Activated CD4-positive, alpha-beta memory T cell treated with anti-CD3 and anti-CD28 coated beads for 36 hours (primary cell): ENCODE measurements at regions of chr2 and their contacts with region 1.

Region 1: DNA sequence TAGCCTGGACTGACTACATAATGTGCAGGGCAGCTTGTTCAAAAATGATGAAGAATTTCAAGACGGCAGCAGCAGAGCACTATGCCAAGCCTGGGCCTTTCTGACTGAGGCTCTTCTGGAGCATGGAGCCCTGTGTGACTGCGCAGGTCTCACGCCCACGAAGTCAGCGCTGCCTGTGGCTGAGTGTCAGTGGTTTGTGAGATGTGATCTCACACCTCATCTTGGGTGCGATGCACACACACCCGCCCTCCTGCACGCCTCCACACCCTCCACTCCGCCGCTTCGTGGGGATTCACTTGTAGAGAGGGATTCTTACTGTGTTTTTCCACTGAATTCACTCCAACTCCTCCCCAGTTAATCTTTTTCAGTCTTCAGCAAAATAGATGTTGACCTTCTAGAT is 103.9 kb downstream of the VIT start:
- DNase-seq: peak; percentile 87
- H3K4me3 Mint-ChIP-seq: peak overlapping the region; percentile 9
- H3K27ac Mint-ChIP-seq: peak overlapping the region; percentile 53
- H3K4me1 Mint-ChIP-seq: peaks cover 11% of the 10 kb centered on the region
- H3K27me3 Mint-ChIP-seq: peaks cover 33% of the 10 kb centered on the region

Region 2: GRCh38 chr2:36711741-36712288 is 88.6 kb before region 1 on chr2:
- CTCF ChIA-PET with region 1: no interaction called
- POLR2A ChIA-PET with region 1: no interaction called
- intact Hi-C with region 1: no loop called
- DNase-seq: no peak
- H3K4me3 Mint-ChIP-seq: no peak overlapping the region
- H3K27ac Mint-ChIP-seq: no peak overlapping the region
- H3K4me1 Mint-ChIP-seq: no peaks in the 10 kb centered on the region
- H3K27me3 Mint-ChIP-seq: peaks cover 8% of the 10 kb centered on the region

Region 3: GRCh38 chr2:36835125-36835524 is 34.7 kb after region 1 on chr2:
- CTCF ChIA-PET with region 1: no interaction called
- POLR2A ChIA-PET with region 1: no interaction called
- intact Hi-C with region 1: loop called (anchors 2 kb)
- DNase-seq: no peak
- H3K4me3 Mint-ChIP-seq: no peak overlapping the region
- H3K27ac Mint-ChIP-seq: peak overlapping the region; percentile 3
- H3K4me1 Mint-ChIP-seq: peaks cover 11% of the 10 kb centered on the region
- H3K27me3 Mint-ChIP-seq: peaks cover 15% of the 10 kb centered on the region

Region 4: DNA sequence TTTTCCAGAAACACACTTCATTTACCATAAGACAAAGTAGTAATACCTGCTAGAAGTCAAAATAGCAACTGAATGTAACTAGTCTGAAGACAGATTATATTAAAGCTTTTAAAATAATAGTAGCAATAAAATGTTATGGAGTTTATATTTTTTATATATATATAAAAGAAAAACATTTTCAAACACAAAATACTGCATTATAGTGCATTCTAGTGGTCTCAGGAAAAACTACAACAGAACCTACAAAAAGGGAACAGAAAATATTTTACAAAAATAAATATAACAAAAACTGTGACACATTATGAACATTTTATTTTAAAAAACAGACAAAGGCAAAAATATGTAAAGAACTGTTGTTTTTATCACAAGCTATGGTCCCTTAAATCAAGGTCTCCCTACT is 117.9 kb after region 1 on chr2:
- CTCF ChIA-PET with region 1: no interaction called
- POLR2A ChIA-PET with region 1: no interaction called
- intact Hi-C with region 1: loop called (anchors 5 kb)
- DNase-seq: no peak
- H3K4me3 Mint-ChIP-seq: no peak overlapping the region
- H3K27ac Mint-ChIP-seq: no peak overlapping the region
- H3K4me1 Mint-ChIP-seq: peaks cover 13% of the 10 kb centered on the region
- H3K27me3 Mint-ChIP-seq: no peaks in the 10 kb centered on the region